Caco-2 (cell line): ENCODE measurements at regions of chr1 and their contacts with region 1.

Region 1: GRCh38 chr1:150629115-150629928 is at the start of gene ENSA:
- DNase-seq: peak; percentile 97 to 99
- H3K4me3 ChIP-seq: peak within 1 kb of the TSS; percentile 56
- H3K4me3 Mint-ChIP-seq: no peak within 1 kb of the TSS
- H3K27ac Mint-ChIP-seq: no peak within 1 kb of the TSS
- H3K4me1 ChIP-seq: peaks cover 6% of the 10 kb centered on the region
- H3K4me1 Mint-ChIP-seq: peaks cover 5% of the 10 kb centered on the region
- H3K27me3 ChIP-seq: no peaks in the 10 kb centered on the region
- H3K27me3 Mint-ChIP-seq: no peaks in the 10 kb centered on the region
- CTCF ChIP-seq: no peak
- total RNA-seq, gene ENSA: 178 TPM in 2 replicates

Region 2: GRCh38 chr1:150456146-150456647 is 173.1 kb before region 1 on chr1:
- CTCF ChIA-PET with region 1: no interaction called
- POLR2A ChIA-PET with region 1: interaction called, 12 read pairs
- intact Hi-C with region 1: no loop called
- DNase-seq: no peak
- H3K4me3 ChIP-seq: no peak overlapping the region
- H3K4me3 Mint-ChIP-seq: no peak overlapping the region
- H3K27ac Mint-ChIP-seq: no peak overlapping the region
- H3K4me1 ChIP-seq: no peaks in the 10 kb centered on the region
- H3K4me1 Mint-ChIP-seq: no peaks in the 10 kb centered on the region
- H3K27me3 ChIP-seq: no peaks in the 10 kb centered on the region
- H3K27me3 Mint-ChIP-seq: no peaks in the 10 kb centered on the region
- CTCF ChIP-seq: no peak

Region 3: GRCh38 chr1:150567717-150568593 is 61.4 kb before region 1 on chr1:
- CTCF ChIA-PET with region 1: no interaction called
- POLR2A ChIA-PET with region 1: interaction called, 27 read pairs
- intact Hi-C with region 1: loop called (anchors 2 kb)
- DNase-seq: peak; percentile 94 to 95
- H3K4me3 ChIP-seq: peak overlapping the region; percentile 18
- H3K4me3 Mint-ChIP-seq: peak overlapping the region; percentile 60
- H3K27ac Mint-ChIP-seq: peak overlapping the region; percentile 82
- H3K4me1 ChIP-seq: peaks cover 56% of the 10 kb centered on the region
- H3K4me1 Mint-ChIP-seq: peaks cover 43% of the 10 kb centered on the region
- H3K27me3 ChIP-seq: no peaks in the 10 kb centered on the region
- H3K27me3 Mint-ChIP-seq: no peaks in the 10 kb centered on the region
- CTCF ChIP-seq: no peak

Region 4: GRCh38 chr1:150696590-150697524 is 67.5 kb after region 1 on chr1 and contains the start of gene GOLPH3L:
- CTCF ChIA-PET with region 1: interaction called, 6 read pairs
- POLR2A ChIA-PET with region 1: interaction called, 19 read pairs
- intact Hi-C with region 1: no loop called
- DNase-seq: peak; percentile 96 to 98
- H3K4me3 ChIP-seq: peak within 1 kb of the TSS; percentile 65
- H3K4me3 Mint-ChIP-seq: peak within 1 kb of the TSS; percentile 98
- H3K27ac Mint-ChIP-seq: peak within 1 kb of the TSS; percentile 97
- H3K4me1 ChIP-seq: no peaks in the 10 kb centered on the region; the same call in 1 of the 2 replicates
- H3K4me1 Mint-ChIP-seq: peaks cover 7% of the 10 kb centered on the region
- H3K27me3 ChIP-seq: no peaks in the 10 kb centered on the region
- H3K27me3 Mint-ChIP-seq: no peaks in the 10 kb centered on the region
- CTCF ChIP-seq: no peak
- total RNA-seq, gene GOLPH3L: 13.3 and 14.7 TPM in 2 replicates

Region 5: DNA sequence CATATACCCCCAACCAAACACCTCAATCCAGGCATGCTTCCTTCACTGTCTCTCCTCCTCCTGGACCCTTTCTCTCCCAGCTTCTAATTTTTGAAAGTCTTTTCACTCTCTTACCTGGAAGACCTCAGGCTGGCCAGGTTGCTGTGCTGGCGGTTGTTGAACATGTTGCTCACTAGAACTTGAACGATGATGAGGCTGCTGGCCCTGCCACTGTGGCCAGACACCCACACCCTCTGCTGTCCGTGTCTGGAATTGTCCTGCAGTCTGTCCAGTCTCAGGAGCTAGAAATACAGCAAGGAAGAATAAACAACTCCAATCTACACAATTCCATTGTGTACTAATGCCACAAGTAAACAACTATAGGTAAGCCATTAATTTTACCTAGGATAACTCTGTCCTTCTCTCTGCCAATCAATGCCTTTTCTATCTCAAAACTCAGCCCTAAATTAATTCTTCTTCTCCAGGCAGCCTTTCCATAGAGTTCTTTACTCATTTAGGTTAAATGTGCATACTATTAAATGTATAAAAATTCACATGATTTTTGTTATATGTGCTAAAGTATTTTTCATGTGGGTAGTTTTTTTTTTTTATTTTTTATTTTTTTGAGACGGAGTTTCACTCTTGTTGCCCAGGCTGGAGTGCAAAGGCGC is 183.9 kb after region 1 on chr1:
- CTCF ChIA-PET with region 1: interaction called, 6 read pairs
- POLR2A ChIA-PET with region 1: interaction called, 5 read pairs
- intact Hi-C with region 1: loop called (anchors 2 kb)
- DNase-seq: peak; percentile 70 to 79
- H3K4me3 ChIP-seq: no peak overlapping the region
- H3K4me3 Mint-ChIP-seq: no peak overlapping the region
- H3K27ac Mint-ChIP-seq: no peak overlapping the region
- H3K4me1 ChIP-seq: peaks cover 27% of the 10 kb centered on the region
- H3K4me1 Mint-ChIP-seq: no peaks in the 10 kb centered on the region
- H3K27me3 ChIP-seq: no peaks in the 10 kb centered on the region
- H3K27me3 Mint-ChIP-seq: no peaks in the 10 kb centered on the region
- CTCF ChIP-seq: peak; percentile 63 to 82

Region 6: GRCh38 chr1:150925816-150926741 is 296.8 kb after region 1 on chr1 and contains the start of gene SETDB1:
- CTCF ChIA-PET with region 1: no interaction called
- POLR2A ChIA-PET with region 1: no interaction called
- intact Hi-C with region 1: loop called (anchors 10 kb)
- DNase-seq: peak; percentile 97 to 98
- H3K4me3 ChIP-seq: peak within 1 kb of the TSS; percentile 77
- H3K4me3 Mint-ChIP-seq: peak within 1 kb of the TSS; percentile 92
- H3K27ac Mint-ChIP-seq: peak within 1 kb of the TSS; percentile 93
- H3K4me1 ChIP-seq: no peaks in the 10 kb centered on the region; the same call in none of the 2 replicates
- H3K4me1 Mint-ChIP-seq: peaks cover 7% of the 10 kb centered on the region
- H3K27me3 ChIP-seq: no peaks in the 10 kb centered on the region
- H3K27me3 Mint-ChIP-seq: no peaks in the 10 kb centered on the region
- CTCF ChIP-seq: no peak
- total RNA-seq, gene SETDB1: 45.0 and 46.7 TPM in 2 replicates

Region 7: GRCh38 chr1:150979092-150980056 is 350.1 kb after region 1 on chr1:
- CTCF ChIA-PET with region 1: interaction called, 10 read pairs
- POLR2A ChIA-PET with region 1: no interaction called
- intact Hi-C with region 1: no loop called
- DNase-seq: peak; percentile 86 to 90
- H3K4me3 ChIP-seq: no peak overlapping the region
- H3K4me3 Mint-ChIP-seq: no peak overlapping the region
- H3K27ac Mint-ChIP-seq: peak overlapping the region; percentile 19
- H3K4me1 ChIP-seq: peaks cover 86% of the 10 kb centered on the region
- H3K4me1 Mint-ChIP-seq: peaks cover 36% of the 10 kb centered on the region
- H3K27me3 ChIP-seq: no peaks in the 10 kb centered on the region
- H3K27me3 Mint-ChIP-seq: no peaks in the 10 kb centered on the region
- CTCF ChIP-seq: peak; percentile 100